Head of caudate nucleus (tissue), 42 donors: ENCODE measurements at regions of chr19 and their contacts with region 1.

Region 1: GRCh38 chr19:53553884-53554791 is 16.2 kb downstream of the ZNF331 start:
- DNase-seq: peak; percentile 63 to 94 (median 88)

Region 2: DNA sequence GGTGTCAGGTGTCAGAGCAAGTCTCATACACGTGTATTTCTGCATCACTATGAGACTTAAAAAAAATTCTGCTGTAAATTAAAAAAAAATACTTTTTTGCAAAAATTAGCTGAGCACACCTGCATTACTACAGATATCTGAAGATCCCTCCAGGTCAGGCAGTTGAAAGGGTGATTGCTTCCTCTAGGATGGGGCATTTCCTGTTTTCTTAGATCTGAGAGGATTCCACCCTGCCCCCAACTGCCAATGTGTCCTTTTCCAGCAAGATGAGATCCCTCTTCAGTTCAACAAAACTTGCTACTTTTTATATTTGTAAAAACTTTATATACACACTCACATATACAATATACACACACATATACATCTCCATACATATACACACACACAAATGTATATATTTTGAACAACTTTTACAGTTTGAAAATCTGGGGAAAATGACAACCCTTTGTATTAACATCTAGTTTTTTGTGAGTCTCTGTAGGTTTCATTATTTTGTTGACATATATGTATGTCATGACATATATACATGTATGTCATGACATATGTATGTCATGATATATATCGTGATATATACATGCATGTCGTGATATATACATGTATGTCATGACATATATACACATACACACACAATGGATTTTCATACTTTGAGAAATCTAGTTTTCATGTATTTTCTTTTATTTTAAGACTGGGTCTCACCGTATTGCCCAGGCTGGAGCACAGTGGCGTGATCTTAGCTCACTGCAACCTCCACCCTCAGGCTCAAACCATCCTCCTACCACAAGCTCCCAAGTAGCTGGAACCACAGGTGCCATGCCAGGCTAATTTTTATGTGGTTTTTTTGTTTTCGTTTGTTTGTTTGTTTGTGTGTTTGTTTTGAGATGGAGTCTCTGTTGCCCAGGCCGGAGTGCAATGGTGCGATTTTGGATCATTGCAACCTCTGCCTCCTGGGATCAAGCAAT is 68.8 kb before region 1 on chr19:
- intact Hi-C with region 1: no loop called
- DNase-seq: no peak

Region 3: GRCh38 chr19:53504885-53505284 is 49.3 kb before region 1 on chr19:
- intact Hi-C with region 1: no loop called
- DNase-seq: peak in 11 of 42 donors; percentile 6 to 43 (median 24)

Region 4: DNA sequence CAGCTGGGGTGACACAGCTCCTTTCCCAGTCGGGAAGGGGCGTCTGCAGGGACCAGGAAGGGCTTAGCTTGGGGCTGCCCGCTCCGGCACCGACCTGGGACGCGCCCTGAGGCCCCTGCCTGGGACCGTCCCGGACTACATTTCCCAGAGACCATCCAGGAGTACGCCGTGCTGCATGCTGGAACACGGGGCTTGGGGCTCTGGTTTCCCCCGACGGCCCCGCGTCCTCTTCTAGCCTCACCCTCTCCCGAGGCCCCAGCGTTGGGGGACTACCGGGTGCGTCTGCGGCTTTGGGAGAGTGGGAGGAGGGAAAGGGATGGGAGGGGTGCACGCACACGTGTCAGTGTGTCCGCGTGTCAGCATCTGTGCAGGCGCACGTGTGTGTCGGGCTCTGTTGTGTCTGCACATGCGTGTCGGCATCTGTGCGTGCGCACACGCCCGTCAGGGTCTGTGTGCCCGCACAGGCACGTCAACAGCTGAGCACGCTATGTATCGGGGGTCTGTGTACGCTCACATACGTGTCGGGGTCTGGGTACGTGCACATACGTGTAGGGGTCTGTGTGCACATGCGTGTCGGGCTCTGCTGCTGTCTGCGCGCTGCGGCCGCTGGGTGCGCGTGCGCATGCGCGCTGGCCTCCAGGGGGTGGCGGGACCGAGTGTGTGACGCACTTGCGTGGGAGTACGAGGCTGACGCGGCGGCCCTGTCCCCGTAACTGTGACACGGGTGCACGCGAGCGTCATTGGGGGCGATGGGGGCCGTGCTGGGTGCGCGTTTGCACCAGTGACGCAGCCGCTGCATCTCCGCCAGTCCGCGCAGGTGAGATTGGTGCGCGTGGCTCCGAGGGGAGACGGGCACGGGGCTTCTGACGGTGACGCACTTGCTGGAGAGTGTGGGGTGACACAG is 16.4 kb before region 1 on chr19 and contains the start of gene ZNF331:
- intact Hi-C with region 1: loop called (anchors 2 kb)
- DNase-seq: peak; percentile 65 to 93 (median 84)

Region 5: DNA sequence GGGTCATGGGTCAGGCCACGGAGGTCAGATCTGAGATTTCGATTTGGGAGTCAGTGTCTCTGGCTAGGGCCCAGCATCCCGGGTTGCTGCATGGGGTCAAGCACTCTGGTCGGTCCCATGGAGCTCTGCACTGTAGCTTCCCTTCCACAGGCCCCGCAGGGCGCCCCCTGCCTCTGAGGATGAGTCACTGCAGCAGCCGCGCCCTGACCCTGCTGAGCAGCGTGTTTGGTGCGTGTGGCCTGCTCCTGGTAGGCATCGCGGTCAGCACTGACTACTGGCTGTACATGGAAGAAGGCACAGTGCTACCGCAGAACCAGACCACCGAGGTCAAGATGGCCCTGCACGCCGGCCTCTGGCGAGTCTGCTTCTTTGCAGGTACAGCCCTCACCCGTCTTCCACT is 358.5 kb after region 1 on chr19:
- intact Hi-C with region 1: no loop called
- DNase-seq: peak in 7 of 42 donors; percentile 5 to 53 (median 26)